ENCODE measurements at regions of chr1 and their contacts with region 1.

Region 1: DNA sequence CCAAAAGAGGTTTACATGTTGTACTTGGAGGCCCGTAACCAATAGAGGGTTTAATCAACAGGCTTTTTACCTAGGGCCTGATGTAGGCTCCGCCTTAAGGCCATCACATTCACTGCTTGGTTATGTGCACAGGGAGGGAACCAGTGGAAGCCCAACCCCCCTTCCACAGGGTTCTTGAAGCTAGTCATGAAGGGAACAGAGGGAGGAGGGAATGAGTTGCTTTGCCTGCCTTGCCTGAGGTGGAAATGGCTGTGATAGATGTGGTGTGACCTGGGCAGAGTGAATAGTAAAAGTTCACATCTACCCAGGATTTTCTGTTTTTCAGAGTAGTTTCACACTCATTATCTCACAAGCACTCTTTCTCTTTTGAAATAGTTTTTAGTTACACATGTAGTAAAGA is 215.1 kb downstream of the ST6GALNAC3 start:
- DNase-seq: no peak
- H3K4me3 ChIP-seq: no peak overlapping the region
- H3K4me3 Mint-ChIP-seq: no peak overlapping the region
- H3K27ac ChIP-seq: no peak overlapping the region
- H3K27ac Mint-ChIP-seq: no peak overlapping the region
- H3K4me1 ChIP-seq: no peaks in the 10 kb centered on the region
- H3K4me1 Mint-ChIP-seq: peaks cover 6% of the 10 kb centered on the region
- H3K27me3 ChIP-seq: no peaks in the 10 kb centered on the region
- H3K27me3 Mint-ChIP-seq: peaks cover 0 to 1% (median 0%) of the 10 kb centered on the region in 3 donors
- CTCF ChIP-seq: no peak

Region 2: GRCh38 chr1:76269155-76269554 is 20.5 kb before region 1 on chr1:
- intact Hi-C with region 1: no loop called
- DNase-seq: peak in 2 of 3 donors; percentile 3 to 5
- H3K4me3 ChIP-seq: no peak overlapping the region
- H3K4me3 Mint-ChIP-seq: peak overlapping the region in 1 of 2 donors; percentile 18
- H3K27ac ChIP-seq: no peak overlapping the region
- H3K27ac Mint-ChIP-seq: peak overlapping the region in 1 of 7 donors; percentile 46
- H3K4me1 ChIP-seq: peaks cover 7 to 13% of the 10 kb centered on the region in 2 donors
- H3K4me1 Mint-ChIP-seq: peaks cover 20% of the 10 kb centered on the region
- H3K27me3 ChIP-seq: no peaks in the 10 kb centered on the region
- H3K27me3 Mint-ChIP-seq: peaks cover 0 to 2% (median 2%) of the 10 kb centered on the region in 3 donors
- CTCF ChIP-seq: no peak

Region 3: DNA sequence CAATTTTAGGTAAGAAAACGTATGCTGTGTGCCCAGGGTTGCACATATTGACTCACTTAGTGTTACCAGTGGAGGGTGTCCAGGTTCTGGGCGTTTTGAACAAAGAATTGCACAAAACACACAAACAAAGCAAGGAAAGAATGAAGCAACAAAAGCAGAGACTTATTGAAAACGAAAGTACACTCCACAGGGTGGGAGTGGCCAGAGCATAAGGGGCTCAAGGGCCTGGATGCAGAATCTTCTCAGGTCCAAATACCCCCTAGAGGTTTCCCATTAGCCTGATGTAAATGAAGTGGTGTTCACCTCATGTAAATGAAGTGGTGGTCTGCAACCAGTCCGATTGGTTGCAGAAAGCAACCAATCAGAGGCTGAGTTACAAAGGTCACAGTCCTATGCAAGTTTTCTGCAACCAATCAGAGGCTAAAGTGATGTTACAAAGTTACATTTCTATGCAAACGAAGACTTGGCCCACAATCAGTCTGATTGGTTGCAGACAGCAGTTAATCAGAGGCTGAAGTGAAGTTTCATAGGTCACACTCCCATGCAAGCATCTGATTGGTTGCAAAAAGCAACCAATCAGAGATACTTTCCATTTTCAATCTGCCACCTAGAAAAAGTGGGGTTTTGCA is 13.1 kb after region 1 on chr1:
- intact Hi-C with region 1: loop called in 1 of 2 experiments (anchors 2 kb)
- DNase-seq: no peak
- H3K4me3 ChIP-seq: no peak overlapping the region
- H3K4me3 Mint-ChIP-seq: no peak overlapping the region
- H3K27ac ChIP-seq: no peak overlapping the region
- H3K27ac Mint-ChIP-seq: no peak overlapping the region
- H3K4me1 ChIP-seq: no peaks in the 10 kb centered on the region
- H3K4me1 Mint-ChIP-seq: no peaks in the 10 kb centered on the region
- H3K27me3 ChIP-seq: no peaks in the 10 kb centered on the region
- H3K27me3 Mint-ChIP-seq: peaks cover 0 to 3% (median 0%) of the 10 kb centered on the region in 3 donors
- CTCF ChIP-seq: no peak

Region 4: GRCh38 chr1:76354236-76354635 is 64.5 kb after region 1 on chr1:
- intact Hi-C with region 1: no loop called
- DNase-seq: no peak
- H3K4me3 ChIP-seq: no peak overlapping the region
- H3K4me3 Mint-ChIP-seq: no peak overlapping the region
- H3K27ac ChIP-seq: no peak overlapping the region
- H3K27ac Mint-ChIP-seq: no peak overlapping the region
- H3K4me1 ChIP-seq: no peaks in the 10 kb centered on the region
- H3K4me1 Mint-ChIP-seq: no peaks in the 10 kb centered on the region
- H3K27me3 ChIP-seq: no peaks in the 10 kb centered on the region
- H3K27me3 Mint-ChIP-seq: no peaks in the 10 kb centered on the region
- CTCF ChIP-seq: no peak